Right ventricle myocardium superior (tissue), 1 donor: ENCODE measurements at regions of chr18 and their contacts with region 1.

Region 1: GRCh38 chr18:63823518-63824219 is 48.5 kb downstream of the SERPINB7 start:
- DNase-seq: peak; percentile 49
- ATAC-seq: no peak

Region 2: GRCh38 chr18:63936156-63936931 is 112.7 kb after region 1 on chr18:
- intact Hi-C with region 1: loop called (anchors 5 kb)
- DNase-seq: peak; percentile 92
- ATAC-seq: peak; percentile 100